ENCODE measurements at regions of chr1 and their contacts with region 1.

Region 1: DNA sequence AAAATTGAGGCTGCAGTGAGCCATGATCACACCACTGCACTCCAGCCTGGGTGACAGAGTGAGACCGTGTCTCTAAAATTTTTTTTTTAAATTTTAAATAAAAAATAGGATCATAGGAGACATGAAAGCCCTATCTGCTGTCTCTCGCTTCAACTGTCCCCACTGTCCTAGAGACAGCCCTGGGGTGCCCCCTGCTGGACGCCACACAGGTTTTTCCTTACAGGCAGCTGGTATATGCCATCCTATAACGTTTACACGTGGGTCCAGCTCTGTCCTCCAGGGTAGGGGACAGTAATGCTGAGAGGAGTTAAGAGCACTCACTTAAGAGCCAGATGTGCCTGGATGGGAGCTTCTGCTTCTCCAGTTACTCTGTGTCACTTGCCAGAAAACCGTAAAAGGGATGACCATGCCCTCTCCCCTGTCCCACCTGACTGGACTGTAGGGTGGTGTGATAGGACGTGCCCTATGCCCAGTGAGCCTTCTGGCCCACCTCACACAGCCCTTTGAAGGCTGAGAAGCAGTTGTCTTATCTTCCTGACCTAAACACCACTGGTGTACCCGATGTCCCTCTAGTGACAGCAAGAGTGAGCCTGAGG is 8.5 kb downstream of the FBXO2 start:
- DNase-seq: peak; percentile 88
- H3K4me3 Mint-ChIP-seq: no peak overlapping the region
- H3K27ac Mint-ChIP-seq: no peak overlapping the region
- H3K4me1 Mint-ChIP-seq: peaks cover 11% of the 10 kb centered on the region
- H3K27me3 Mint-ChIP-seq: no peaks in the 10 kb centered on the region

Region 2: DNA sequence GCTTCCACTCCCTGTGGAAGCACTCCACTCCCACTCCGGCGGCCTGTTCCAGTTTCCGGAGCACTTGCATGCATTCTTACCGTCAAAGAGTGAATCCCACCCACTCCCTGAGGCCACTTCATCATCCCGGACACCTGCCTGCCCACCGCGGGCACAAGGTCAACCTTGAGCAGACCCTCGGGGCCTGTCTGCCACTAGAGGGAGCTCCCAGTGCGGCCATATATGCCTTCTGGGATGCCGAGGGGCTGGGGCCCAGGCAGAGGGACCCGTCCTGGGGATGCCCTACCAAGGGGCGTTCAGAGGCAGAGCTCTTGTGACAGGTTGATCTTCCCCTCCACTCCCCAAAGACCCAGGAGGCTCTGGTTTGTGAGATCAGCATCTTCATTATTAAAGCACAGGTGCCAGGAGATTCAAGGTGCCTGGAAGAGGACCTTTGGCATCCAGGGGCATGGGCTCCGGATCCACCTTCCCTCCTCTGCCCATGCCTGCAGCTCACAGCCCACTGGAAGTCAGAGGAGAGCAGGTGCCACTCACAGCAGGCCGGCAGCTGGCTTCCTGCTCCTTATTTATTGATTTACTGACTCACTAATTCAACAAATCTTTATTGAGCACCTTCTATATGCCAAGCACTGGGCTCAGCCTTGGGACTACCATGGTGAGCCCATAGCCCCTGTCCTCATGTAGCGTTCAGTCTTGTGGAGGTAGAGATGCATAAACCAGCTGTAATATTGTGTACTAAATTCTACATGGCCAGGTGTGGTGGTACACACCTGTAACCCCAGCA is 325.4 kb before region 1 on chr1:
- CTCF ChIA-PET with region 1: interaction called, 4 read pairs
- POLR2A ChIA-PET with region 1: no interaction called
- intact Hi-C with region 1: loop called (anchors 5 kb)
- DNase-seq: peak; percentile 47
- H3K4me3 Mint-ChIP-seq: no peak overlapping the region
- H3K27ac Mint-ChIP-seq: no peak overlapping the region
- H3K4me1 Mint-ChIP-seq: peaks cover 3% of the 10 kb centered on the region
- H3K27me3 Mint-ChIP-seq: peaks cover 7% of the 10 kb centered on the region

Region 3: GRCh38 chr1:11478571-11479374 is 167.0 kb before region 1 on chr1 and contains the start of gene DISP3:
- CTCF ChIA-PET with region 1: interaction called, 7 read pairs
- POLR2A ChIA-PET with region 1: no interaction called
- intact Hi-C with region 1: loop called (anchors 10 kb)
- DNase-seq: peak; percentile 75
- H3K4me3 Mint-ChIP-seq: peak within 1 kb of the TSS; percentile 57
- H3K27ac Mint-ChIP-seq: no peak within 1 kb of the TSS
- H3K4me1 Mint-ChIP-seq: peaks cover 8% of the 10 kb centered on the region
- H3K27me3 Mint-ChIP-seq: peaks cover 36% of the 10 kb centered on the region
- total RNA-seq, gene DISP3: 0.07 to 0.21 TPM

Region 4: DNA sequence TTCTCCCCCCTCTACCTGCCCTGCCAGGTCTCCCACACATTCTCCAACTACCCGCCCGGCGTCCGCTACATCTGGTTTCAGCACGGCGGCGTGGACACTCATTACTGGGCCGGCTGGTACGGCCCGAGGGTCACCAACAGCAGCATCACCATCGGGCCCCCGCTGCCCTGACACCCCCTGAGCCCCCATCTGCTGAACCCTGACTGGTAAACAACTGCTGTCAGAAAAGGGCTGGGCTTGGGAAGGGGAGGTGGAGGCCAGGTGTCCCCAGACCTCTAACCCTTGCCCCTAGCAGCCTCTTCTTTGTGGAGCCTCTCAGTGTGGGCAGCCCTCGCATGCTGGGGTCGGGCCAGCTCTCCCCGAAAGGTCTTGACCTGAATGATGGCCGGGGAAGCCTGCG is 15.3 kb after region 1 on chr1:
- CTCF ChIA-PET with region 1: interaction called, 59 read pairs
- POLR2A ChIA-PET with region 1: interaction called, 10 read pairs
- intact Hi-C with region 1: no loop called
- DNase-seq: no peak
- H3K4me3 Mint-ChIP-seq: no peak overlapping the region
- H3K27ac Mint-ChIP-seq: no peak overlapping the region
- H3K4me1 Mint-ChIP-seq: no peaks in the 10 kb centered on the region
- H3K27me3 Mint-ChIP-seq: no peaks in the 10 kb centered on the region

Region 5: GRCh38 chr1:11711490-11711889 is 65.7 kb after region 1 on chr1:
- CTCF ChIA-PET with region 1: interaction called, 21 read pairs
- POLR2A ChIA-PET with region 1: no interaction called
- intact Hi-C with region 1: no loop called
- DNase-seq: no peak
- H3K4me3 Mint-ChIP-seq: no peak overlapping the region
- H3K27ac Mint-ChIP-seq: no peak overlapping the region
- H3K4me1 Mint-ChIP-seq: no peaks in the 10 kb centered on the region
- H3K27me3 Mint-ChIP-seq: peaks cover 2% of the 10 kb centered on the region

Region 6: GRCh38 chr1:11735854-11736745 is 90.3 kb after region 1 on chr1 and contains the start of gene AGTRAP:
- CTCF ChIA-PET with region 1: interaction called, 11 read pairs
- POLR2A ChIA-PET with region 1: interaction called, 4 read pairs
- intact Hi-C with region 1: no loop called
- DNase-seq: peak; percentile 93
- H3K4me3 Mint-ChIP-seq: peak within 1 kb of the TSS; percentile 96
- H3K27ac Mint-ChIP-seq: peak within 1 kb of the TSS; percentile 85
- H3K4me1 Mint-ChIP-seq: peaks cover 49% of the 10 kb centered on the region
- H3K27me3 Mint-ChIP-seq: no peaks in the 10 kb centered on the region
- total RNA-seq, gene AGTRAP: 16.5 to 18.0 TPM

Region 7: DNA sequence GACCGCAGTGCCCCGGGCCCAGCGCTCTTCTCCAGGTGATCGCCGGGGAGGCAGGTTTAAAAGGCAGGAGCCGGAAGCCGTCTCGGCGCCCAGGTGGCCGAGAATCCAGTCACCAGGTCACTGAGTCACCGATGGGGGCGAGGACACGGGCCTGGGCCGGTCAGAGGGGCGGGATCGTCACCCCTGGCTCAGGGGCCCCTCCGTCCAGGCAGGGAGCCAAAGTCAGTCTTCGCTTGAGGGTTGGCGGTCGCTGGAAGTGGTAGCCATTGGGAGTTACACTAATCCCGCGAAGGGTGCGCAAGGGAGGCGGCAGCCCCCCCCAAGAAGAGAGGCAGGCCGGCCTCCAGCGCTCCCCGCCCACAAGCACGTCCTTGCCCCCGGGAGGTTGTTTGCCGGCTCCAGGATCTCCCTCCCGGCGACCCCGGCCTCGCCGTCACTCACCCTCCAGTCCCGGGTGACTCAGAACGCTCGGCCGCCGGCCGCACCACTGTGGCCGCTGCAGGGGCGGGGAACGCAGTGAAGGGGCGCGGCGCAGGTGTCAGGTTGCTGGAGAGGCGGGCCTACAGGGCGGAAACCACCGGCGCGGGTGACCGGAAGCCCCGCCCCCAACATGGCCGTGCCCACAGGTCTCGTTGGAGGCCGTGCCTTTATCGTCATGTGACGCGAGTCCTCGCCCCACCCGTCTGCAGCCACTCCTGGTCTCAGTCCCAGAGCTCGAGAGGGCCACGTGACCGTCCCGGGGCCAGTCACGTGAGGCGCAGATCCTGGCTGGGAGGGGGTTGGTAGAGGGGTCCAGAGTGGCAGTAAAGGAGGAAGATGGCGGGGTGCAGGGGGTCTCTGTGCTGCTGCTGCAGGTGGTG is 159.9 kb after region 1 on chr1 and contains the starts of genes CLCN6 and MTHFR:
- CTCF ChIA-PET with region 1: interaction called, 4 read pairs
- POLR2A ChIA-PET with region 1: no interaction called
- intact Hi-C with region 1: loop called (anchors 5 kb)
- DNase-seq: peak; percentile 99
- H3K4me3 Mint-ChIP-seq: peak within 1 kb of the TSS; percentile 84
- H3K27ac Mint-ChIP-seq: peak within 1 kb of the TSS; percentile 88
- H3K4me1 Mint-ChIP-seq: peaks cover 51% of the 10 kb centered on the region
- H3K27me3 Mint-ChIP-seq: no peaks in the 10 kb centered on the region
- total RNA-seq, gene CLCN6: 11.3 to 11.6 TPM
- total RNA-seq, gene MTHFR: 12.8 to 13.3 TPM